Caco-2 (cell line): ENCODE measurements at regions of chr4 and their contacts with region 1.

Region 1: DNA sequence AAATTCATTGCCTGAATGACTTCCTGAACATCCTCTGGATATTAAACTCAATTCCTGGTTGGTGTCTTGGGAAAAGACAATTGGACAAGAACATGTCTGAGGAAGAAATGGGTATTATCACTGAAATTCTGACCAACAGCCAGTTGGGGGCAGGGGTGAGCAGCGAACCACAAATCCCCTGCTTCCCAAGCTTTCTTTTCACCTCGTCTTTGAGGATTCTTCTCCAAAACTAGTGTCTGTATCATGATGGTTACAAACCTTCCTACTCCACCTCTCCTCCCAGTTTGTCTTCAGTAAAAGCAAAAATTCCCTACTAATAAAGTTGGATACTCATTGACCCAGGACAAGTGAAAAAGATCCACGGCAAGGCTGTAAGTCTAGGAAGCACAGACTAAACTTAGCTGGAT is 48.3 kb upstream of the WDR1 start:
- DNase-seq: peak in 1 of 2 experiments; percentile 56
- H3K4me3 ChIP-seq: no peak overlapping the region
- H3K4me3 Mint-ChIP-seq: no peak overlapping the region
- H3K27ac Mint-ChIP-seq: no peak overlapping the region
- H3K4me1 ChIP-seq: peaks cover 18% of the 10 kb centered on the region
- H3K4me1 Mint-ChIP-seq: peaks cover 20% of the 10 kb centered on the region
- H3K27me3 ChIP-seq: no peaks in the 10 kb centered on the region
- H3K27me3 Mint-ChIP-seq: no peaks in the 10 kb centered on the region
- CTCF ChIP-seq: peak; percentile 50 to 63

Region 2: GRCh38 chr4:10212901-10213300 is 48.0 kb after region 1 on chr4:
- CTCF ChIA-PET with region 1: interaction called, 3 read pairs
- POLR2A ChIA-PET with region 1: no interaction called
- intact Hi-C with region 1: loop called (anchors 1 kb)
- DNase-seq: no peak
- H3K4me3 ChIP-seq: no peak overlapping the region
- H3K4me3 Mint-ChIP-seq: peak overlapping the region; percentile 29
- H3K27ac Mint-ChIP-seq: peak overlapping the region; percentile 42
- H3K4me1 ChIP-seq: peaks cover 37% of the 10 kb centered on the region
- H3K4me1 Mint-ChIP-seq: no peaks in the 10 kb centered on the region
- H3K27me3 ChIP-seq: no peaks in the 10 kb centered on the region
- H3K27me3 Mint-ChIP-seq: no peaks in the 10 kb centered on the region
- CTCF ChIP-seq: no peak

Region 3: GRCh38 chr4:10260777-10261176 is 95.9 kb after region 1 on chr4:
- CTCF ChIA-PET with region 1: no interaction called
- POLR2A ChIA-PET with region 1: no interaction called
- intact Hi-C with region 1: loop called (anchors 10 kb)
- DNase-seq: no peak
- H3K4me3 ChIP-seq: no peak overlapping the region
- H3K4me3 Mint-ChIP-seq: no peak overlapping the region
- H3K27ac Mint-ChIP-seq: no peak overlapping the region
- H3K4me1 ChIP-seq: no peaks in the 10 kb centered on the region
- H3K4me1 Mint-ChIP-seq: no peaks in the 10 kb centered on the region
- H3K27me3 ChIP-seq: no peaks in the 10 kb centered on the region
- H3K27me3 Mint-ChIP-seq: no peaks in the 10 kb centered on the region
- CTCF ChIP-seq: no peak

Region 4: GRCh38 chr4:10403633-10404445 is 239.0 kb after region 1 on chr4:
- CTCF ChIA-PET with region 1: interaction called, 31 read pairs
- POLR2A ChIA-PET with region 1: no interaction called
- intact Hi-C with region 1: loop called (anchors 1 kb)
- DNase-seq: peak in 1 of 2 experiments; percentile 52
- H3K4me3 ChIP-seq: no peak overlapping the region
- H3K4me3 Mint-ChIP-seq: no peak overlapping the region
- H3K27ac Mint-ChIP-seq: no peak overlapping the region
- H3K4me1 ChIP-seq: no peaks in the 10 kb centered on the region; the same call in 1 of the 2 replicates
- H3K4me1 Mint-ChIP-seq: no peaks in the 10 kb centered on the region
- H3K27me3 ChIP-seq: no peaks in the 10 kb centered on the region
- H3K27me3 Mint-ChIP-seq: no peaks in the 10 kb centered on the region
- CTCF ChIP-seq: peak; percentile 48 to 50